ENCODE measurements at regions of chrX and their contacts with region 1.

Region 1: DNA sequence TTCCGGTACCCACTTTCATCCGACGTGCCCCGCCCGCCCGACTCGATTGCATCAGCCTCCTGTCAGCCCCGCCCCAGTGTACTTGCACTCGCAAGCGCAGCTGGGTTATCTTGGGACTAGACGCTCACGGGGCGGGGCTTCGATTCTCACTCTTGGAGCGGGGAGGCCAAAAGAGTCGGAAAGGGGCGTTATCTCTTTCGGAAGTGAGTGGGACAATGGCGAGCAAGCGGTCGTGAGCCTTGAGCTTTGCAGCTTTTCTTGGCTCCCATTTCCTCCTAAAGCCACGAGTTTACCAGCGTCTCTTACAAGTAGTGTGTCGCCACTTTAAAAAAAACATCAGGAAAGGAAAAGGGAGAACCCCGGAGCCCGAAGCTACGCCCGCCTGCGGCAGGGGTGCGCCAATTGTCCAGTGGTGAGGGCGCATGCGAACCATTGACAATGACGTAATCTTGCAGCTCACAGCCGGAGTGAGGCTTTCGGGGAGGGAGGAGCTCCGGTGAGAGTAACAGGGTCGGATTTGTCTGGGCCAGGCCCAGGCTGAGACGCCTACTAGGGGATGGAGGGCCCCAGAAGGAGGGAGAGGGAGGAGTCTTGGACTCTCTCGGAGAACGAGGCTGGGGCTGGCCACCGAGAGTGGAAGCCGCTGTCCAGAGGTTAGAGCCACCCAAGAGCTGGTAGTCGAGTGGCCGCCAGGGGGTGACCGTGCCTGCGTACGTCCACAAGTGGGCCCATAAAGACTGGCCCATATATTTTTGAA is 109.5 kb downstream of the GNL3L start:
- DNase-seq: peak; percentile 88 to 95
- H3K4me3 ChIP-seq: peak overlapping the region; percentile 57
- H3K27ac ChIP-seq: peak overlapping the region; percentile 93
- H3K4me1 ChIP-seq: peaks cover 25% of the 10 kb centered on the region
- H3K27me3 ChIP-seq: no peaks in the 10 kb centered on the region
- CTCF ChIP-seq: peak; percentile 77

Region 2: DNA sequence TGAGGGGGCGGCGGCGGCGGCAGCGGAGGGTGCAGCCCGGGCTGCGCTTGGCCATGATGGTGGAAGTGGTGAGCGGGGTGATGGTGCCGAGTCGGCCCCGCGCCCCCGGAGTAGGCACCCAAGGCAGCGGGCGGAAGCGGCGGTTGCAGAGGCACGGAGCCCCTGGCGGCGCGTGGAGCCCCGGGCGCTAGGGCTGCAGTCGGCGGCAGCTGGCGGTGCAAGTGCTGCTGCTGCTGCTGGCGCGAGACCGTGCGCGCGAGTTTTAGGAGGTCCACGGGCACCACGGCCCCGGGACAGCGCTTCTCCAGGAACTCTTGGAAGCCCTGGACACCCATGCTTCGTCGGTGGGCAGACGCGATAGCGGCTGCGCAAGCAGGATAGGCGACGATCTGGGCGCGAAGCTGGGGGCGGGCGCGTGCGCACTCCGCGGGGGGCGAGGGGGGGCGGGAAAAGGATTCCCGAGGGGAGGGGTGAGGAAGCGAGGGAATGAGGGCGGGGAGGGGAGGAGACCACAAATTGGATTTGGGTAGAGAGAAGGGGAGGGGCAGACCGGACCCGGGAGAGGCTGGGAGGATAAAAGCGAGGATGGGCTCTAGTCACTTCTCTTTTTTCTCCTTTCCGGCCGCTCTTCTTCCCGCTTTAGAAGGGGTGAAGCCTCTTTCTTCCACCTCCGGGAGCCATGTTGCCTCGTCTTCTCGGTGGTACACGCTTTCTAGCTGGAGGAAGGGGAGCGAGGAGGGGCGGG is 456.5 kb before region 1 on chrX and contains the start of gene FAM120C:
- CTCF ChIA-PET with region 1: interaction called, 3 read pairs
- POLR2A ChIA-PET with region 1: no interaction called
- intact Hi-C with region 1: loop called (anchors 10 kb)
- DNase-seq: peak; percentile 53 to 72
- H3K4me3 ChIP-seq: peak within 1 kb of the TSS; percentile 78
- H3K27ac ChIP-seq: peak within 1 kb of the TSS; percentile 73
- H3K4me1 ChIP-seq: peaks cover 40% of the 10 kb centered on the region
- H3K27me3 ChIP-seq: no peaks in the 10 kb centered on the region
- CTCF ChIP-seq: no peak
- total RNA-seq, gene FAM120C: 21.6 and 22.0 TPM in 2 replicates

Region 3: DNA sequence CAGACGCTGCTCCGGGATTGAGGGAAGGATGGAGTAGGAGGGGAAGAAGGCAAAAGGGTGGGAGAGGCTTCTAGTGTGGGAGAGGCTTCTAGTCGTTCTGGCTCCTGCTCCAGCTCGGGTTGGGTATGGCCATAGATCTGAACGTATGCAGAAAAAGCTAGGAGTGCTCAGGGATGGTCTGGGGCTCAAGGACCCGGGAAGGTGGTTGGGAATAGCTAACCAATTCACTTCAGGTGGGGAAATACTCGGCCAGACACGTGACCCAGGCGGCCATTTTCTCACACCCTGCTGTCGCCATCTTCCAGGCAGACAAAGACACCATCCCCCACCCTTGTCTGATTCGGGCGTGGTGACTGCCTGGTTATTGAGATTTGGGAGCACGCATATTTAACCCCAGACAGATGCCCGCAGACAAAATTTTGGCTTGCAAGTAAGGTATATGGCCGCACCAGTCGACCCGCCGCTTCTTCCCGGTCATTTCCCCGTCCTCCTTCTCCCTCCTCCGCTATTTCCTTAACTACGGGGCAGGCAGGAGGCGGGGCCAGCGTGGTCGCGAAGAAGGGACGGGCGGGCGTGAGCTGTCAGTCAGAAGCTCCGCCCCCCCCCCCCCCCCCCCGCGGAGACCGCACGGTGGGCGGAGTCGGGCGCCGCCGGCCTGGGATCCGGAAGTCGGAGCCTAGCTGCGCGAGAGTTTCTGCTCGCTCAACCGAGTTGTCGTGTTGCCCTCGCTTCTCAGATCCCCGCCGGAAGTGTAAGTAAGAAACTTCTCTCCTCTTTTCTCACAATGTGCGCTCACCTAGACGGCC is 109.8 kb before region 1 on chrX and contains the start of gene GNL3L:
- CTCF ChIA-PET with region 1: no interaction called
- POLR2A ChIA-PET with region 1: interaction called, 8 read pairs
- intact Hi-C with region 1: loop called (anchors 1 kb)
- DNase-seq: peak; percentile 74 to 87
- H3K4me3 ChIP-seq: peak within 1 kb of the TSS; percentile 93
- H3K27ac ChIP-seq: peak within 1 kb of the TSS; percentile 84
- H3K4me1 ChIP-seq: peaks cover 10% of the 10 kb centered on the region; the same call in 1 of the 2 replicates
- H3K27me3 ChIP-seq: no peaks in the 10 kb centered on the region
- CTCF ChIP-seq: no peak
- total RNA-seq, gene GNL3L: 61.4 and 77.4 TPM in 2 replicates

Region 4: DNA sequence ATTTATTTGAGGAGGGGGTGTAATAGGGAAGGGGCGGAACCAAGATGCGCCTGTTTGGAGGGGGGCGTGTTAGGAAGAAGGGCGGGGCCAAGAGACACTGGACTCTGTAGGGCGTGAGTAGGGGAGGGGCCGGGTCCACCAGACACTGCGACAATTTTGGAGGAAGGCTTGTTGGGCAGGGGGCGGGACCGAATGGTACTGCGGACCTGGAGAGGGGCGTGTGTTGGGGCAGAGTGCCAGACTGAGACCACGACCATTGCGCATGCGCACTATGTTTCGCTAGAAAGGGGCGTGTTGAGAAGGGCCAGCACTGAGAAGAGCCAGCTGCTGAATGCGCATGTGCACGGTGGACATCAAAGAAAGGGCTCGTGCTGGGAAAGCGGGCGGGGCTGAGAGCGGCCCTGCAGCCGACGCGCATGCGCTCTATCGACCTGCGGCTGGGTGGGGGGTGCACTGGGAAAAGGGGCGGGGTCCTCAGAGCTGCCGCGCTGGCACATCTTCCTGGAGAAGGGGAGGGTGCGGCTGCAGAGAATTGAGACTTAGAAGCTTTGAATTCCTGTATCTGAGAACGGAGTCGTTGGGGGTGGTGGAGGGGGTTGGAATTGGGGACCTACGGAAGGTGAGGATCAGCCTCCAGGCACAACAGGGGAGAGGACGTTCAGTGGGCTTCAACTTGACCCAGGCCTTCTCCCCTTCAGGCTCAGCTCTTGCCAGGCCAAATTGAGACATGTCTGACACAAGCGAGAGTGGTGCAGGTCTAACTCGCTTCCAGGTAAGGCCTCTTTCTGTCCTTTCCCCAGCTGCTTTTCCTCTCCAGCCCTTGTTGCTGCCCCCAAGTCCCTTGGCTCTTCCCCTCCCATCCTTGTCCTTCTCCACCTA is 169.3 kb after region 1 on chrX:
- CTCF ChIA-PET with region 1: interaction called, 3 read pairs
- POLR2A ChIA-PET with region 1: interaction called, 15 read pairs
- intact Hi-C with region 1: loop called (anchors 1 kb)
- DNase-seq: peak; percentile 84 to 97
- H3K4me3 ChIP-seq: peak overlapping the region; percentile 86
- H3K27ac ChIP-seq: no peak overlapping the region
- H3K4me1 ChIP-seq: peaks cover 8% of the 10 kb centered on the region; the same call in 1 of the 2 replicates
- H3K27me3 ChIP-seq: peaks cover 9% of the 10 kb centered on the region; the same call in 1 of the 2 replicates
- CTCF ChIP-seq: no peak

Region 5: DNA sequence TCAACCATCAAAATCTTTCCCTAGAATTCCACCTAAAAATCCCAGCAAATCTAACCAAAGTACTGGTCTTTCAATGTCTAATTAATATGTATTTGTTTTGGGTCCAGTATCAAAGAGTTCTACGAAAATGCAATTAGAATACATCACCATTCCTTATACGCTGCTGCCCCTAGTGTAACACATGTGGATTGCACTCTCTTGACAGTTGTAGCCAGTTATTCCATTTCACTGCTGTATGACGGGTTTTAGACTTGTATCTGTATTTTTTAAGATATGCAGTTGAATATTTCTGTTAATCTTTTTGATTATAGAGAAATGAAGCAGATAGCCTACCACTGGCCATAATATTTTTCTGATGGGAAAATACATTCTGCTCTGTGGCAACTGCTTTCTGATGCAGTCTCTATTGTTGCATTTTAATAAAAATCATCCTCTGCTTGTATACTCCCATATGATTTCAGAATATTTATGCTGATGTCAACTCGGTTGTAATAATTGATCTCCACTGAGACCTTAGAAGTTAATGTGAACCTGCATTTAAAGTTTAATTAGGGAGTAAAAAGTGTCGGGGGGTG is 418.2 kb after region 1 on chrX:
- CTCF ChIA-PET with region 1: no interaction called
- POLR2A ChIA-PET with region 1: no interaction called
- intact Hi-C with region 1: loop called (anchors 5 kb)
- DNase-seq: peak in 1 of 2 experiments; percentile 12
- H3K4me3 ChIP-seq: no peak overlapping the region
- H3K27ac ChIP-seq: no peak overlapping the region
- H3K4me1 ChIP-seq: no peaks in the 10 kb centered on the region
- H3K27me3 ChIP-seq: no peaks in the 10 kb centered on the region
- CTCF ChIP-seq: peak; percentile 87

Measured in PC-9 (cell line).